Head of caudate nucleus (tissue), 42 donors: ENCODE measurements at regions of chr11 and their contacts with region 1.

Region 1: GRCh38 chr11:47552566-47553416 is at the start of gene CELF1:
- DNase-seq: peak; percentile 80 to 97 (median 93)

Region 2: DNA sequence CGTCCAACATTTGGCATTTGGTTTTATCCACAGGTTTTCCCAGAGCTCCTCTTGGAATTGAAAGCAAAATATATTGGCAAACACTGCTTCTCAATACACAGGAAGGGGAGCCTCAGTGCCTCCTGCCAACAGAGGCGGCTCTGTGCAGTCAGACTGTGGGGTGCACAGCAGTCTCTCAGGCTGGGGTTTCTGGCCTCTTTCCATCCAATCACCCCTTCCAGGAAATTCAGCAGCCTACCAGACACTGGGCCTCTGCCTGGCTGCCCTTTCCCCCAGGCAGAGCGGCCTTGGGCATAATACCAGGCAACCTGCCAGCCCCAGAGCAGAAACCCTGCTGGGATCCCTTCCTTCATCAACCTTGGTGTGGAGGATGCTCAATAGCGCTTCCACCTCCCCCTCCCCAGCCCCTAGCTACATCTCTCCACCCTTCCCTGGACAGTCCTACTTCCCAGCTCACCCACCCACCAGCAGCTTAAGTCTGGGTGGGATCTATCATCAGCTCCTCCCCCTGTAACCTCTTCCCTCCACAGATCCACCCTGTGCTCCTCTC is 86.0 kb before region 1 on chr11:
- intact Hi-C with region 1: loop called (anchors 10 kb)
- DNase-seq: peak; percentile 54 to 91 (median 76)